CD4-positive, alpha-beta T cell (primary cell): ENCODE measurements at regions of chr5 and their contacts with region 1.

Region 1: GRCh38 chr5:31531888-31532710 is at the starts of genes C5orf22 and DROSHA:
- DNase-seq: peak; percentile 78 to 95 (median 88)
- ATAC-seq: peak; percentile 96
- H3K4me3 ChIP-seq: peak within 1 kb of the TSS; percentile 83
- H3K4me3 Mint-ChIP-seq: peak within 1 kb of the TSS; percentile 98
- H3K27ac ChIP-seq: peak within 1 kb of the TSS; percentile 48 to 65
- H3K27ac Mint-ChIP-seq: peak within 1 kb of the TSS; percentile 90
- H3K4me1 ChIP-seq: peaks cover 33% of the 10 kb centered on the region
- H3K4me1 Mint-ChIP-seq: peaks cover 76% of the 10 kb centered on the region
- H3K27me3 ChIP-seq: no peaks in the 10 kb centered on the region
- H3K27me3 Mint-ChIP-seq: no peaks in the 10 kb centered on the region
- CTCF ChIP-seq: no peak
- total RNA-seq, gene C5orf22: 9.8 to 12.3 TPM
- total RNA-seq, gene DROSHA: 28.8 to 38.1 TPM

Region 2: GRCh38 chr5:31598640-31599611 is 66.8 kb after region 1 on chr5:
- CTCF ChIA-PET with region 1: no interaction called
- POLR2A ChIA-PET with region 1: no interaction called
- intact Hi-C with region 1: no loop called
- DNase-seq: no peak
- ATAC-seq: no peak
- H3K4me3 ChIP-seq: no peak overlapping the region
- H3K4me3 Mint-ChIP-seq: no peak overlapping the region
- H3K27ac ChIP-seq: no peak overlapping the region
- H3K27ac Mint-ChIP-seq: no peak overlapping the region
- H3K4me1 ChIP-seq: no peaks in the 10 kb centered on the region
- H3K4me1 Mint-ChIP-seq: no peaks in the 10 kb centered on the region
- H3K27me3 ChIP-seq: peaks cover 0 to 5% of the 10 kb centered on the region in 2 experiments
- H3K27me3 Mint-ChIP-seq: peaks cover 17% of the 10 kb centered on the region
- CTCF ChIP-seq: no peak

Region 3: GRCh38 chr5:32076699-32077695 is 544.9 kb after region 1 on chr5:
- CTCF ChIA-PET with region 1: no interaction called
- POLR2A ChIA-PET with region 1: interaction called, 3 read pairs
- intact Hi-C with region 1: loop called in 1 of 2 experiments (anchors 2 kb)
- DNase-seq: peak in 12 of 14 experiments; percentile 9 to 61 (median 30)
- ATAC-seq: peak; percentile 56
- H3K4me3 ChIP-seq: no peak overlapping the region
- H3K4me3 Mint-ChIP-seq: no peak overlapping the region
- H3K27ac ChIP-seq: no peak overlapping the region
- H3K27ac Mint-ChIP-seq: no peak overlapping the region
- H3K4me1 ChIP-seq: no peaks in the 10 kb centered on the region
- H3K4me1 Mint-ChIP-seq: no peaks in the 10 kb centered on the region
- H3K27me3 ChIP-seq: no peaks in the 10 kb centered on the region
- H3K27me3 Mint-ChIP-seq: no peaks in the 10 kb centered on the region
- CTCF ChIP-seq: peak; percentile 78

Region 4: GRCh38 chr5:32092938-32093812 is 561.1 kb after region 1 on chr5:
- CTCF ChIA-PET with region 1: no interaction called
- POLR2A ChIA-PET with region 1: interaction called, 3 read pairs
- intact Hi-C with region 1: loop called in 1 of 2 experiments (anchors 5 kb)
- DNase-seq: peak; percentile 29 to 79 (median 54)
- ATAC-seq: peak; percentile 93
- H3K4me3 ChIP-seq: no peak overlapping the region
- H3K4me3 Mint-ChIP-seq: no peak overlapping the region
- H3K27ac ChIP-seq: no peak overlapping the region
- H3K27ac Mint-ChIP-seq: no peak overlapping the region
- H3K4me1 ChIP-seq: peaks cover 6% of the 10 kb centered on the region
- H3K4me1 Mint-ChIP-seq: peaks cover 7% of the 10 kb centered on the region
- H3K27me3 ChIP-seq: no peaks in the 10 kb centered on the region
- H3K27me3 Mint-ChIP-seq: no peaks in the 10 kb centered on the region
- CTCF ChIP-seq: peak; percentile 77

Region 5: DNA sequence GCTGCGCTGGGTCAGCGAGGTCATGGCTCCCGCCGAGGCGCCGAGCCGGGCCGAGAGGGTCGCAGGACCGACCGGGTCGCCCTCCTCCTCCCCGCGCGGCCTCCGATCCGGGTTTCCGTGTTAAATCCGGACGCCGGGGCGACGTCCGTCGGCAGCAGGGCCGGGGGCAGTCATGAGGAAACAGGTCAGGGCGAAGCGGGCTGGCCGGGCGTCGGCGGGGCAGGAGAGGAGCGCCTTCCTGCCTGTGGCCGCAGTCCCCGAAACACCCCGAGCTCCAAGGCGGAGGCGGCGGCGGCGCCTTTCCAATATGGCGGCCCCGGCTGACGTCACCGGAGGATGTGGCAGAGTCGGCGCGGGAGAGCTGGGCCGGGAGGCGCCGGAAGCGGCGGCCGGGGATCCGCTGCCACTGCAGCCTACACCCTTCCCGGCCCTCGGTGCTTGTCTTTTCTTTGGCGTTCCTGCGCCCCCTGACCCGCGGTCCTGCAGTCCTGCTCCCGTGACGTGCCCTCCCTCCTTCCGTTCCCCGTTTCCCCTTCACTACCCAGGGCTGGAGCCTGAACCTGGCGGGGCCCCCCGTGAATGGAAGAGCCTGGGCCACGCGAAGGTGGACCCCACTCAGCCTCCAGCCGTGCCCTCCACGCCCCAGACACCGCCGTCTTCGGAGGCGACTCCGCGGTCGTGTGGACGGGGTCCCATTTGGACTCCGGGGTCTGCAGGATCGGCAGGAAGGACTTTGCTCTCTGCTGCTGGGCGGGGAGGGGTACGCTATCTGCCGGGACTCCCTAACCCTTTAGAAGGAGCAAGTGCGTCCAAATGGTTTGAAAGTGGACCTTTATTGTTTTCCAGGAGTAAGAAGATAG is 642.1 kb after region 1 on chr5 and contains the start of gene GOLPH3:
- CTCF ChIA-PET with region 1: no interaction called
- POLR2A ChIA-PET with region 1: interaction called, 5 read pairs
- intact Hi-C with region 1: loop called in 1 of 2 experiments (anchors 10 kb)
- DNase-seq: peak; percentile 84 to 94 (median 91)
- ATAC-seq: peak; percentile 84
- H3K4me3 ChIP-seq: peak within 1 kb of the TSS; percentile 90
- H3K4me3 Mint-ChIP-seq: peak within 1 kb of the TSS; percentile 99
- H3K27ac ChIP-seq: peak within 1 kb of the TSS; percentile 89 to 95
- H3K27ac Mint-ChIP-seq: peak within 1 kb of the TSS; percentile 95
- H3K4me1 ChIP-seq: peaks cover 18% of the 10 kb centered on the region
- H3K4me1 Mint-ChIP-seq: peaks cover 39% of the 10 kb centered on the region
- H3K27me3 ChIP-seq: no peaks in the 10 kb centered on the region
- H3K27me3 Mint-ChIP-seq: peaks cover 6% of the 10 kb centered on the region
- CTCF ChIP-seq: no peak
- total RNA-seq, gene GOLPH3: 52.0 to 55.4 TPM

Region 6: GRCh38 chr5:32312647-32313523 is 780.8 kb after region 1 on chr5 and contains the start of gene MTMR12:
- CTCF ChIA-PET with region 1: no interaction called
- POLR2A ChIA-PET with region 1: no interaction called
- intact Hi-C with region 1: loop called in 1 of 2 experiments (anchors 5 kb)
- DNase-seq: peak; percentile 99 to 100 (median 100)
- ATAC-seq: peak; percentile 92
- H3K4me3 ChIP-seq: peak within 1 kb of the TSS; percentile 87
- H3K4me3 Mint-ChIP-seq: peak within 1 kb of the TSS; percentile 91
- H3K27ac ChIP-seq: peak within 1 kb of the TSS; percentile 65 to 78
- H3K27ac Mint-ChIP-seq: peak within 1 kb of the TSS; percentile 93
- H3K4me1 ChIP-seq: peaks cover 35% of the 10 kb centered on the region
- H3K4me1 Mint-ChIP-seq: peaks cover 43% of the 10 kb centered on the region
- H3K27me3 ChIP-seq: no peaks in the 10 kb centered on the region
- H3K27me3 Mint-ChIP-seq: no peaks in the 10 kb centered on the region
- CTCF ChIP-seq: no peak
- total RNA-seq, gene MTMR12: 15.9 to 18.3 TPM

Region 7: DNA sequence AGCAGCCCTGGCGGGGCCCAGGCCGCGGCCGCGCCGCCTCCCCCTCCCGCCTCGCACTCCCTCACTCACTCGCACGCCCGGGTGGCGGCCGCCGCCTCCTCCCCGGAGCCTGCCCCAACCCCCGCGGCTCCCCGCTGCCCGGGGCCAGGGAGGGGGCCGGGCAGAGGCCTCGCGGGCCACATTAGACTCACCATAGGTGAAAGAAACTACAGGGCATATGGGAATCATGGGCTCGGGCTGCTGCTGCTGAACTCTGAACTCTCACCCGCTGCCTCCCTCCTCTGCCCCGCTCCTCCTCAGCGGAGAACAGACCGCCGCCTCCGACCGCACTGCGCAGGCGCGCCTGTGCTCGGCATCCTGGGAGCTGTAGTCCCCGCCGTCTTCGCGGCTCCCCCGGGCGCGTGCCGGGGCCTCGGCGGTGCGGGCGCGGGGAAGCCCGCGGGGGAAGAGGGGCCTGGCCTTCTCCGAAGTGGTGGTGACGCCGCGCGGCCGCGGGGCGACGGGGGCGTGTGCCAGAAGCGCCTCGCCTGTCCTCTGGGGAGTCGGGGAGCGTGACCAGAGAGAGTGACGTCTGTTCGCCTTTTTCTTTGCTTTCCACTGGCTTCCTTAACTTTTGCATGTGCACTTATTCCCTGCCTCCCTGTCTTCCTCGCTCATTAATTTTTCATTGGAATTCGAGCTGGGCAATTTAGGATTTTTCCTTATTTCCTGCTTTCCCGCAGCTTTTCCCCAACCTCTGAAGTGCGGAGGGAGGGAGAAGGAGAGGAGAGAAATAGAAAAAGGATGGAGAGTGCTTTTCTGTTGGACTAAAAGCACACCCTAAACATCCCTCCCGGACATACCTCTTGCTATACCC is 912.6 kb after region 1 on chr5 and contains the start of gene ZFR:
- CTCF ChIA-PET with region 1: no interaction called
- POLR2A ChIA-PET with region 1: no interaction called
- intact Hi-C with region 1: loop called in 1 of 2 experiments (anchors 5 kb)
- DNase-seq: peak; percentile 84 to 98 (median 92)
- ATAC-seq: peak; percentile 92
- H3K4me3 ChIP-seq: peak within 1 kb of the TSS; percentile 89
- H3K4me3 Mint-ChIP-seq: peak within 1 kb of the TSS; percentile 93
- H3K27ac ChIP-seq: peak within 1 kb of the TSS; percentile 88 to 91
- H3K27ac Mint-ChIP-seq: peak within 1 kb of the TSS; percentile 89
- H3K4me1 ChIP-seq: peaks cover 26% of the 10 kb centered on the region
- H3K4me1 Mint-ChIP-seq: peaks cover 32% of the 10 kb centered on the region
- H3K27me3 ChIP-seq: no peaks in the 10 kb centered on the region
- H3K27me3 Mint-ChIP-seq: no peaks in the 10 kb centered on the region
- CTCF ChIP-seq: no peak
- total RNA-seq, gene ZFR: 58.8 to 61.0 TPM

Region 8: GRCh38 chr5:32504989-32505596 is 973.0 kb after region 1 on chr5:
- CTCF ChIA-PET with region 1: no interaction called
- POLR2A ChIA-PET with region 1: no interaction called
- intact Hi-C with region 1: no loop called
- DNase-seq: peak in 4 of 14 experiments; percentile 20 to 28 (median 27)
- ATAC-seq: peak; percentile 39
- H3K4me3 ChIP-seq: no peak overlapping the region
- H3K4me3 Mint-ChIP-seq: no peak overlapping the region
- H3K27ac ChIP-seq: no peak overlapping the region
- H3K27ac Mint-ChIP-seq: peak overlapping the region; percentile 46
- H3K4me1 ChIP-seq: peaks cover 12% of the 10 kb centered on the region
- H3K4me1 Mint-ChIP-seq: peaks cover 26% of the 10 kb centered on the region
- H3K27me3 ChIP-seq: no peaks in the 10 kb centered on the region
- H3K27me3 Mint-ChIP-seq: no peaks in the 10 kb centered on the region
- CTCF ChIP-seq: no peak